ENCODE measurements at regions of chr17 and their contacts with region 1.

Region 1: DNA sequence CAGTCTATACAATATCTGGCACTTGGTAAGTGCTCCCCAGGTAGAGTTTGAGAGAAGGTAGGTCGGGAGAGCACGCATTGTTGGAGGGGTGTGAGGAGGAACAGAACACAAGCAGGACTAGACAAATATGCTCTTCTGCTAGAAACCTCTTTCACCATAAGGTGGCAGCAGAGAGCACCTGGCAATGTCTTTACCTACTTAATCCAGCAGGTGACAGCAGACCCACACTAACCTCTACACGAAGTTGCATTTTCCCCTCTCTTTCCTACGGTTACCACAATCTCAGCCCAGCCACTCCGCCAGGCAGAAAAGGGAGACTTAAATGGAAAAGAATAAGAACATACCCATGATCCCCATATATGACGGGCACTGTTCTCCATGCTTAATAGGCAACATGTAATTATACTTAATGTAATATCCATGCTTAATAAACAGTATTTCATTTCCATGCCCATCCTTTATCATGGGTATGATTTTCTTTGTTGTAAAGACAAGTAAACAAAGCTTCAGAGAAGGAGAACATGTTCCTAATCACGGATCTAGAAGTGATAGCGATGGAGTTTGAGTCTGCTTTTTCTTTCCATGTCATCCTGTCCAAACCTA is 55.1 kb upstream of the CCL2 start:
- DNase-seq: peak; percentile 80
- H3K4me3 ChIP-seq: no peak overlapping the region
- CTCF ChIP-seq: peak; percentile 100

Region 2: DNA sequence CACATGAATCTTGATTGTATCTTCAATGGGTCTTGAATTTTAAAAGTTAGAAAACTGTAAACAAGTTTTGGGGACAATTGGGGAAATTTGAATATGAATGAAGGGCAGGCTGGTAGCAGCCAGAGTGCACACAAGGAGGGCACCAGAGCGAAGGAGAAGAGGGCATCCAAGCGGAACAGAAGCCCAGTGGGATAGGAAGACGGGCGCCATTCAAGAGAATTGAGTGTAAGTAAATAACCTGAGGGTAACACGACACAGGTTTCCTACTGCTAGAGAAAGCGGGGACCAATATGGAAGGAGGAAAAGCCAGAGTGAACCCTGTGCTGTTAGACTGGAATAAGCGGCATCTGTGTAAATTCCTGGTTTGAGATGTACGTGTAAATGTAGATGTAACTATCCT is 60.0 kb before region 1 on chr17:
- in situ Hi-C with region 1: no loop called
- DNase-seq: no peak
- H3K4me3 ChIP-seq: no peak overlapping the region
- CTCF ChIP-seq: no peak

Region 3: GRCh38 chr17:34361478-34362061 is 161.5 kb after region 1 on chr17:
- in situ Hi-C with region 1: loop called (anchors 25 kb)
- DNase-seq: peak; percentile 85
- H3K4me3 ChIP-seq: no peak overlapping the region
- CTCF ChIP-seq: peak; percentile 97

Measured in astrocyte of the spinal cord (primary cell).